Right lobe of liver (tissue), 6 donors: ENCODE measurements at regions of chr9 and their contacts with region 1.

Region 1: GRCh38 chr9:131459056-131459455 is 43.7 kb upstream of the POMT1 start:
- DNase-seq: peak in 1 of 3 donors; percentile 42
- ATAC-seq: peak in 1 of 4 donors; percentile 29
- H3K4me3 ChIP-seq: no peak overlapping the region
- H3K27ac ChIP-seq: no peak overlapping the region
- H3K4me1 ChIP-seq: no peaks in the 10 kb centered on the region
- H3K27me3 ChIP-seq: no peaks in the 10 kb centered on the region
- CTCF ChIP-seq: no peak
- POLR2A ChIP-seq: no peak

Region 2: DNA sequence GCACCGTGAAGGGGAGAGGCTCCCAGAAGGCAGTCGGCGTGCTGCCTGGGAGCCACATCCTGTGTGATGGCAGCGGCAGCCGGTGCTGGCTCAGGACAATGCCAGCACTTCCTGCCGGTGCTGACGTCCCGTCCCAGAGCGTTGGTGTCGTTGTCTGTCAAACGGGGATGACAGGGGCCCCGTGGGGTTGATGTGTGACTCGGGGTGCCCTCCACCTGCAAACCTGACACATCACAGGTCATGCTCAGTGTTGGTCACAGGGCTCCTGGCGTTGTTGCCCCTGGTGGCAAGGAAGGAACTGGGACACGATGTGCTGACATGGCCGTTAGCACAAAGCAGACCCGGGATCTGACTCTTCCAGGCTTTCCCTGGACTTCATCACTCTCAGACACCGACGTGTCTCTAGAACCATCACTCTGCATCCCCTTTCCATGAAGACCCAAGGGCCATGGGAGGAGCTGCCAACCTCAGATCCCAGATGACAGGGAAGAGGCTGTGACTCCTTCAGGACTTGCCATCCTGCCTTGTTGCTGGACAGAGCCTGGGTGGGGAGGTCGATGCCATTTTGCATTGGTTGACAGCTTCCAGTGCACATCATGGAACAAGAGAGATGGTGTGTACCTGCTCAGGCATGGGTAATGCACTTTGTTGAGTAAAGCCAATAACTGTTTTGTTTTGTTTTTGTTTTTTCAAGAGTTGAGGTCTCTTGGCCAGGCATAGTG is 148.1 kb before region 1 on chr9:
- intact Hi-C with region 1: no loop called
- DNase-seq: no peak
- ATAC-seq: peak in 3 of 4 donors; percentile 21 to 49 (median 41)
- H3K4me3 ChIP-seq: no peak overlapping the region
- H3K27ac ChIP-seq: no peak overlapping the region
- H3K4me1 ChIP-seq: no peaks in the 10 kb centered on the region
- H3K27me3 ChIP-seq: no peaks in the 10 kb centered on the region
- CTCF ChIP-seq: no peak
- POLR2A ChIP-seq: no peak

Region 3: GRCh38 chr9:131382850-131383729 is 76.0 kb before region 1 on chr9:
- intact Hi-C with region 1: loop called in 1 of 2 experiments (anchors 10 kb)
- DNase-seq: no peak
- ATAC-seq: peak; percentile 90 to 93 (median 92)
- H3K4me3 ChIP-seq: no peak overlapping the region
- H3K27ac ChIP-seq: peak overlapping the region in 2 of 3 donors; percentile 32 to 50
- H3K4me1 ChIP-seq: peaks cover 0 to 6% (median 0%) of the 10 kb centered on the region in 4 donors
- H3K27me3 ChIP-seq: no peaks in the 10 kb centered on the region
- CTCF ChIP-seq: no peak
- POLR2A ChIP-seq: no peak